Tibial artery (tissue), 4 donors: ENCODE measurements at regions of chr7 and their contacts with region 1.

Region 1: GRCh38 chr7:73721377-73721817 is 1.9 kb upstream of the STX1A start:
- DNase-seq: peak; percentile 77 to 92
- H3K4me3 ChIP-seq: no peak overlapping the region
- H3K27ac ChIP-seq: peak overlapping the region; percentile 72 to 81
- H3K4me1 ChIP-seq: peaks cover 0 to 54% (median 50%) of the 10 kb centered on the region in 4 donors
- H3K27me3 ChIP-seq: peaks cover 0 to 5% of the 10 kb centered on the region in 2 donors
- CTCF ChIP-seq: no peak

Region 2: GRCh38 chr7:73606801-73607691 is 114.4 kb before region 1 on chr7:
- intact Hi-C with region 1: loop called (anchors 1 kb)
- DNase-seq: no peak
- H3K4me3 ChIP-seq: no peak overlapping the region
- H3K27ac ChIP-seq: no peak overlapping the region
- H3K4me1 ChIP-seq: peaks cover 0 to 7% (median 3%) of the 10 kb centered on the region in 4 donors
- H3K27me3 ChIP-seq: peaks cover 0 to 50% of the 10 kb centered on the region in 2 donors
- CTCF ChIP-seq: peak; percentile 92 to 97

Region 3: DNA sequence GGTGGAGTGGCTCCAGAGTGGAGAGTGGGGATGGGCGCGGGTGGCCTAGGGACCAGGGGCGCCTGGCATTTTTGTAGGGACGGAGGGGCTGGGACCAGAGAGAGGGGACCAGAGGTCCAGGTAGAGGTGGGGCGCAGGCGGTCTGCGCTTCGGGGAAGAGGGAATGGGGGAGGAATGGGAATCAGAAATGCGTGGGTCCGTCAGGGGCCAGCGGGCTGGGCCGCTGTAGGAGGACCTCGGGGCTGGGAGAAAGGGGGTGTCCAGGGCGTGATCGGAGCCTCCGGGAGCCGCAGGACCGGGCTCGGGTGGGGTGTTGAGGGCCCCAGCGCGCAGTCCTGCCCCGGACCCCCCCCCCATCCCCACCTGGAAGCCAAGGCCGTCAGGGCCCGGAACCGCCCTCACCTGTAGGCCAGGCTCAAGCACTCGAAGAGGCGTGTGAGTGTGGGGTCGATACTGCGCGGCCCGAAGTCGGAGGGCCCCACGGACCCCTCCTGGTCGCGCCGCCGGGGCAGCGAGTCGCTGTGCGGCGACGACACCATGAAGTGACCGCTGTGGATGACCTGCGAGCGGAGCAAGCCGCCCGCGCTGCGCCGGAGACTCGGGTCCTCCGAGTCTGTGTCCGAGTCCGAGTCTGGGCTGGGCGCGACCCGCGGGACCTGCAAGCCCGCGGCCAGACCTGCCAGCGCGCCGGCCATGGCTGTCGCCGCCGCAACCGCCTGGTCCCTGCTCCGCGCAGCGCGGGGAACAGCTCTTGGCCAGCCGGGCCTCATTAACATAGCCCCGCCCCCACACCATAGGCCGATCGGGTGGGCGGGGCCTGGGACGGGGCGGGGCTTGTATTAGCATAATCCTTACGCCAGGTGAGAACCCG is 97.4 kb before region 1 on chr7 and contains the start of gene MLXIPL:
- intact Hi-C with region 1: loop called (anchors 5 kb)
- DNase-seq: peak in 1 of 2 donors; percentile 66
- H3K4me3 ChIP-seq: peak within 1 kb of the TSS; percentile 31 to 54
- H3K27ac ChIP-seq: no peak within 1 kb of the TSS
- H3K4me1 ChIP-seq: peaks cover 0 to 22% (median 22%) of the 10 kb centered on the region in 4 donors
- H3K27me3 ChIP-seq: peaks cover 6 to 89% of the 10 kb centered on the region in 2 donors
- CTCF ChIP-seq: no peak

Region 4: DNA sequence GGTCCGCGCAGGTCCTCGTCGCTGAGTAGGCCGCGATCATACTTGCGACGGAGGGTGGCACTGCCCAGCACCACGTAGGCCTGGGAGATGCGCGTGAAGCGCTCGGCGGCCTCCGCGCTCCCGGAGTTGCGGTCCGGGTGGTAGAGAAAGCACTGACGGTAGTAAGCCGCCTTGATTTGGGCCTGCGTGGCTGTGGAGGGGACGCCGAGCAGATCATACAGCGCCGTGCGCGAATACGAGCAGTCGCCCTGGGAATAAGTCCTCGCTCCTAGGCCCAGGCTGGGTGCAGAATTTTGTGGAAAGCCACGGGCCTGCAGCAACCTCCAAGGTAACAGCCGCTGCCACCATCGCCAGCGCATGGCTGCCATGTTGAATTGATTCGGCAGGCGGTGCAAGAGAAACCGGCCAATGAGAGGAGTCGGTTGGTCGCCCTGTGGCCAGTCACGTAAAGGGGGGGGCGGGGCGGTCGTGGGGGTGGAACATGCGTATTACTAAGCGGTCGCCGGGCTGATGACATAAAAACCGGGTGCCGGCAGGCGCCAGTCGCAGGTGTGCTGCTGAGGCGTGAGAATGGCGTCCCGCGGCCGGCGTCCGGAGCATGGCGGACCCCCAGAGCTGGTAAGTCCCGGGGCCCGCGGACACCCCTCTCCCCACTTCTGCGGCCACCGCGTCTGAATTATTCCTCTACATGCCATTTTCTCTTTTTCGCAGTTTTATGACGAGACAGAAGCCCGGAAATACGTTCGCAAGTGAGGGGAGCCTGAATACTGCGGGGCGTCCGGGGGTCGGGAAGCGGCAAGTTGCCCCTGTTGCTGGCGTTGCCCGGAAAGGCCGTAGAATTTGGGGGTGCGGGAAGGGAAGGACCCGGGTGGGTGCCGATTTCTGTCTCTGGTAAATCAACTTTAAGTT is 38.1 kb before region 1 on chr7 and contains the starts of genes BUD23 and DNAJC30:
- intact Hi-C with region 1: loop called (anchors 5 kb)
- DNase-seq: peak; percentile 98 to 99
- H3K4me3 ChIP-seq: peak within 1 kb of the TSS; percentile 87 to 98
- H3K27ac ChIP-seq: peak within 1 kb of the TSS; percentile 81 to 93
- H3K4me1 ChIP-seq: peaks cover 0 to 37% (median 28%) of the 10 kb centered on the region in 4 donors
- H3K27me3 ChIP-seq: no peaks in the 10 kb centered on the region
- CTCF ChIP-seq: peak in 1 of 2 experiments; percentile 36